Head of caudate nucleus (tissue), 42 donors: ENCODE measurements at regions of chr6 and their contacts with region 1.

Region 1: DNA sequence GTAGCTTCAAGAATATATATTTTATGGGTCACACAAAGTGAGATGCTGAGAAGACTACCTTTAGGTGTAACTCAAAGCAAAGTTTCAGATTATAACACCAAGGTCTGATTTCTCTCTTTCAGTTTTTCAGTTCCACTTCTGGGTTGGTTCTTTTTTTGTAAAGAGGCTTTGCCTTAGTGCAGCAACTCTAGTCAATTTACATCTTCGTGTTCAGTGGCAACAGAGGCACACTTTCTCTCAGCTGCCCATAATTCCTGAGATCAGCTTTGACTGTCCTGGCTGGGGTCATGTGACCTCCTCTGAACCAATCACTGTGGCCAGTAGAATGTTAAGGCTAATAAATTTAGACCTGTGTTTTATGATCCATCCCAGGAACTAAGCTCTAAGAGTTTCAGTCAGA is 120.2 kb downstream of the TINAG start:
- DNase-seq: no peak

Region 2: DNA sequence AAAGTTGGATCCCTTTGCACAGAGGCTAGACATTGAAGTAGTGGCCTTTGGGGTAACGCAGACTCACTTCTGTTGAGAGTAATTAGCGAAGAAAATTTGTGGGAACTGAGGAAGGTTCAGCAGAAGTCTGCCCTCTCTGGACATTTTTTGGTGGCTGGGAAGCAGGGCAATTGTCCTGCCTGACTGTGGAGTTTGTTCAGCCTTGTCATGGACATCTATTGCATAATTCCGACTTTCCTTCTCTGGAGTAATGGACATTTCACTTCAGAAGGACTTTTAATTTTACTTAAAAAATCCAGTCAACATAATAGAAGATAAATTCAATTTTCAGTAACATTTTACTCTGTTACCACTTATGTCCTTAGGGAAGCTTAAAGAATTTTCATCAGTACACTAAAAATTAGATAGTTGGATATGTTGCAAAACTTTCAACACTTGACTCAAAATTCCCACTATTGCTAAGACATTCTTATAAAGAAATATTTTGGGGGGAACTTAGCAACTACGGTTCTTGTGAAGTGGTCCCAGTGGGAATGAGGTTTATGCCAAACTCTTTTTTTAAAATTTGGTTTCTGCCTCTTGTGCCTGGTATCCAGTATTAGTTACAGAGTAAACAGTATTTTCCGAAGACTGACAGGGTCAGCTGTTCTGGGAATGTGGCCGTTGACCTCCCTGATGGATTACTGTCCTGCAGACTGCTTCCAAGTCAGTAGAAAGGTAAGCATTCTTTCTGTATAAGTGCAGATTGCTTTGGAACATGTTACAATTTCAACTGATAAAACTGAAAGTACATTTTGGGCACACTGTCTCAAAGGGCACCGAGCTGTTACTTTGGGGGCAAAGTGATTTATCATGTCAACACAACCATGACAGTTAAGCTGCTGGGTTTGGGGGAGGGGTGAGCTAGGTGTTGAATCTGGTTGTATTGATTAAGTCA is 417.8 kb before region 1 on chr6:
- intact Hi-C with region 1: no loop called
- DNase-seq: no peak

Region 3: DNA sequence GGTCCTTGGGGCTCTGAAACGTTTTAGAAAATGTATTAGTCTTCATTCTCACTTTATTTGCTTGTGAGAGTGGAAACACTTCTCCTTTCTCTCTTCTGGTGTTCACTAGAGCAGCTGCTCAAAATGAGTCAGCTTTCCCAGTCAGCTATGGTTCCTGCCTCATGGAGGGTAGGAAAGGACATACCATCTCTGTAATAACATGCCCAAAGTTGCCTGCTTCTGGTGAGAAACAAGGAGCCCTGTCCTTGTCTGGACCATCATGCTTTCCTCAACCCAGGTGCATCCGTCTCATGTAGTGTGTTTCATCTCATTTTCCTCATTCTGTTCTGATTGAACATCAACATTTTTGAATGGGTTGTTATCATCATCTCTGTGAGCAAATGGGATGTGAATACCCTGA is 137.3 kb before region 1 on chr6:
- intact Hi-C with region 1: loop called (anchors 5 kb)
- DNase-seq: peak in 6 of 42 donors; percentile 1 to 39 (median 8)